Testis (tissue), 5 donors: ENCODE measurements at regions of chr2 and their contacts with region 1.

Region 1: DNA sequence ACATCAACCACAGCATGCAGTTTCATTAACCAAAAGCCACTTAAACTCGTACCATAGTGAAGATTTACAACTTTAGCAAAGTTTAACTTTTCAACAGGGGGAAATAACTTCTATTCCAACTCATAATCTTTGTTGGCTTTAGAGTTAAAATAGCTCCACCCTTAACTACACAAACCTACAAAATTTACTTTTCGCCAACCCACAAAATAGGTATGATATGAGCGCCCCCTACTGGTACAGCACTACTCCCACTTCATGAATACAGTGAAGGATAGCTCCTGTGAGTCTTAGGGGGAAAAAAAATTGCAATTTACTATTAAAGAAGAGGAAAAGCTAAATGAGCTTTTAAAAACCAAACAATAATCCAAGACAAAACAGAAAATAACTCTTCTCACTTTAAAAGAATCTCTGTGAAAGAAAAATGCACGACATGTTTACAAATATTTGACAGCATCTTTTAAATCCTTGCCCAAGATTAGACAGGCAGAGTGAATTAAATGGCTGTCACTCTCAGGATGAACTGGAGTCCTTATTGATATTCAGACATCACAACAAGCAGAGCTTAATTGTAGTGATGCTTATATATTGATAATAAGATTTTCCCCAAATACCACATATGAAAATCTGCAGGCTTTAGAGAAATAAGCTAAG is 32.2 kb downstream of the TMEFF2 start:
- DNase-seq: peak; percentile 87
- H3K4me3 ChIP-seq: no peak overlapping the region
- H3K27ac ChIP-seq: no peak overlapping the region
- H3K4me1 ChIP-seq: peaks cover 5% of the 10 kb centered on the region
- H3K27me3 ChIP-seq: no peaks in the 10 kb centered on the region
- CTCF ChIP-seq: peak; percentile 92 to 96 (median 93)
- POLR2A ChIP-seq: no peak

Region 2: DNA sequence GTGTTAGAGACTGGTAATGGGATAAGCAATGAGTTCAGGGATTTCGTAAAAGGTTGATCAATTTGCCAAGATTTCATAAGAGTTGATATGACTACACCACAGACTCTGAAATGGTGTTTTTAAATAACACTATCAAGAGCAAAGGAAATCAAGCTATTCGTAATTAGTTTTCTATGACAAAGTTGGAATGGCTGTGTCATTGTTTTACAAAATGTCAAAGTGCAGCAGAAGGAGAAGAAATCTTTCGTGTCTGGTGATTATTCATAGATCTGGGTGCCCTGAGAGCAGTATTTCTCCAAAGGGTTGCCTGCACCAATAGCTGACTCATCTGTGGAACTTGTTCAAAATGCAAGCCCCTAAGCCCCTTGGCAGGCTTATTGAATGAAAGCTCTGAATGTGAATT is 414.5 kb before region 1 on chr2:
- intact Hi-C with region 1: no loop called
- DNase-seq: no peak
- H3K4me3 ChIP-seq: no peak overlapping the region
- H3K27ac ChIP-seq: no peak overlapping the region
- H3K4me1 ChIP-seq: no peaks in the 10 kb centered on the region
- H3K27me3 ChIP-seq: no peaks in the 10 kb centered on the region
- CTCF ChIP-seq: no peak
- POLR2A ChIP-seq: no peak

Region 3: GRCh38 chr2:191818725-191819350 is 343.7 kb before region 1 on chr2:
- intact Hi-C with region 1: loop called (anchors 5 kb)
- DNase-seq: no peak
- H3K4me3 ChIP-seq: no peak overlapping the region
- H3K27ac ChIP-seq: no peak overlapping the region
- H3K4me1 ChIP-seq: no peaks in the 10 kb centered on the region
- H3K27me3 ChIP-seq: no peaks in the 10 kb centered on the region
- CTCF ChIP-seq: no peak
- POLR2A ChIP-seq: no peak

Region 4: DNA sequence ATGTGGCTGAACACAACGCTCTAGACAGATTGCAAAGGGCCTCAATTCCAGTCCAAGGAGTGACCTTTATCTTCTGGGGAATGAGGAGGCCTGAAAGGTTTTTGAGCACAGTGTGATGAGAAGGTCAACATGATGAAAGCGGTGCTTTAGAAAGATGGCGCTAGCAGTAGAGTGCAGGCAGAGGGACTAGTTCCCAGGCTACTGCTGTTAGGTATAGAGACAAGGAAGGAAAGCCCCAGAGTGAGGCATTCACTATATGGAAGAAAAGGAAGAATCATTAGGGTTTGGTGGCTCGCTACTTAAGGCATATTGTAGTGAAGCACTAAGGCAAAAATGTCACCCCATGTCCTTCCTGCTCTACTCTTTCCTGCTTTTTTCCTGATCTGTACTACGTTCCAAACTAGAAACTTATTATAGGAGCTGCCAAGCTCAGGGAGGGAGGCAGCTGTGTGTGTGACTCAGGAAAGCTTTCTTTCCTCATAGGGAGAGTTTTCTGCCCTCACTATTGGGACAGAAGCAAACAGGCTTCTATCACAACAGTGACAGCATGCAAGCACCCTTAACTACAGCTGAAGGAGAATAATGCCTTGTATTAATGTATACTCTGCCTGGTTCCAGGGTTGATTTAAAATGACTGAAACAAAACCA is 154.8 kb before region 1 on chr2:
- intact Hi-C with region 1: no loop called
- DNase-seq: no peak
- H3K4me3 ChIP-seq: no peak overlapping the region
- H3K27ac ChIP-seq: no peak overlapping the region
- H3K4me1 ChIP-seq: no peaks in the 10 kb centered on the region
- H3K27me3 ChIP-seq: no peaks in the 10 kb centered on the region
- CTCF ChIP-seq: no peak
- POLR2A ChIP-seq: no peak

Region 5: GRCh38 chr2:192215096-192215877 is 52.8 kb after region 1 on chr2:
- intact Hi-C with region 1: no loop called
- DNase-seq: no peak
- H3K4me3 ChIP-seq: no peak overlapping the region
- H3K27ac ChIP-seq: no peak overlapping the region
- H3K4me1 ChIP-seq: no peaks in the 10 kb centered on the region
- H3K27me3 ChIP-seq: no peaks in the 10 kb centered on the region
- CTCF ChIP-seq: no peak
- POLR2A ChIP-seq: no peak